Colonic mucosa (tissue), 4 donors: ENCODE measurements at regions of chr2 and their contacts with region 1.

Region 1: GRCh38 chr2:102020596-102021181 is 28.9 kb downstream of the IL1R2 start:
- DNase-seq: peak; percentile 89
- H3K4me3 ChIP-seq: no peak overlapping the region
- H3K27ac ChIP-seq: peak overlapping the region; percentile 1
- H3K4me1 ChIP-seq: no peaks in the 10 kb centered on the region
- H3K27me3 ChIP-seq: no peaks in the 10 kb centered on the region
- CTCF ChIP-seq: peak; percentile 98

Region 2: GRCh38 chr2:102114290-102114721 is 93.6 kb after region 1 on chr2:
- intact Hi-C with region 1: no loop called
- DNase-seq: no peak
- H3K4me3 ChIP-seq: no peak overlapping the region
- H3K27ac ChIP-seq: no peak overlapping the region
- H3K4me1 ChIP-seq: no peaks in the 10 kb centered on the region
- H3K27me3 ChIP-seq: no peaks in the 10 kb centered on the region
- CTCF ChIP-seq: no peak

Region 3: DNA sequence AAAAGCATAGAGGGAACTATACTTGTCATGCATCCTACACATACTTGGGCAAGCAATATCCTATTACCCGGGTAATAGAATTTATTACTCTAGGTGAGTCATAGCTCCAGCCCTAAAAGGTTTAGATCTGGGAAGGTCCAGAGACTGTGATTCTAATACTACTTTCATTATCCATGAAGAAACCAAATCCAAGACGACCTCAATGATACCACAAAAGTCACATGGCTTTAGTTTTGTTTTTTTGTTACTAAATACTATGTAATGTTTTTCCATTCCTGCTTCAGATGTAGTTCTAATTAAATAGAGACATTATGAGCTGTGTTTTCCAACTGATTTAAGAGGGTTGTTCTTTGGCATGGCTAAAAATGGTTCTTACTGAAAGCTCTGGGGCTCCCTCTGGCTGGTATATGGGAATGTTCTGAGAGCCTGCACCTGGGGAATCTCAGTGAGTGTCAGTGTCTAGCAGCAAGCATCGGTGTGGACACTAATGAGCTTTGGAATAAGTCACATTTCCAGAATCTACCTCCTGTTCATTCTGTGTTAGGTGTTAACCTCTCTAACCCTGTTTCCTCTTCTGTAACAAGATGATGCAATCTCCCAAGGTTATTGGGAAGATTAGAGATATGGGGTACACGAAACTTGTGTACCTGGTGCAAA is 145.6 kb after region 1 on chr2:
- intact Hi-C with region 1: loop called (anchors 5 kb)
- DNase-seq: no peak
- H3K4me3 ChIP-seq: no peak overlapping the region
- H3K27ac ChIP-seq: no peak overlapping the region
- H3K4me1 ChIP-seq: no peaks in the 10 kb centered on the region
- H3K27me3 ChIP-seq: no peaks in the 10 kb centered on the region
- CTCF ChIP-seq: peak; percentile 39

Region 4: GRCh38 chr2:102251042-102251848 is 230.6 kb after region 1 on chr2:
- intact Hi-C with region 1: no loop called
- DNase-seq: peak; percentile 81
- H3K4me3 ChIP-seq: peak overlapping the region; percentile 40
- H3K27ac ChIP-seq: no peak overlapping the region
- H3K4me1 ChIP-seq: no peaks in the 10 kb centered on the region
- H3K27me3 ChIP-seq: no peaks in the 10 kb centered on the region
- CTCF ChIP-seq: peak; percentile 74

Region 5: GRCh38 chr2:102449370-102449974 is 428.8 kb after region 1 on chr2:
- intact Hi-C with region 1: loop called (anchors 10 kb)
- DNase-seq: peak; percentile 34
- H3K4me3 ChIP-seq: no peak overlapping the region
- H3K27ac ChIP-seq: no peak overlapping the region
- H3K4me1 ChIP-seq: no peaks in the 10 kb centered on the region
- H3K27me3 ChIP-seq: no peaks in the 10 kb centered on the region
- CTCF ChIP-seq: peak; percentile 45